MCF 10A (cell line): ENCODE measurements at regions of chr18 and their contacts with region 1.

Region 1: GRCh38 chr18:63410792-63411191 is 11.5 kb downstream of the VPS4B start:
- DNase-seq: peak; percentile 74
- H3K4me3 Mint-ChIP-seq: no peak overlapping the region
- H3K27ac Mint-ChIP-seq: peak overlapping the region; percentile 57
- H3K4me1 Mint-ChIP-seq: peaks cover 25% of the 10 kb centered on the region
- H3K27me3 Mint-ChIP-seq: no peaks in the 10 kb centered on the region
- CTCF ChIP-seq: no peak

Region 2: DNA sequence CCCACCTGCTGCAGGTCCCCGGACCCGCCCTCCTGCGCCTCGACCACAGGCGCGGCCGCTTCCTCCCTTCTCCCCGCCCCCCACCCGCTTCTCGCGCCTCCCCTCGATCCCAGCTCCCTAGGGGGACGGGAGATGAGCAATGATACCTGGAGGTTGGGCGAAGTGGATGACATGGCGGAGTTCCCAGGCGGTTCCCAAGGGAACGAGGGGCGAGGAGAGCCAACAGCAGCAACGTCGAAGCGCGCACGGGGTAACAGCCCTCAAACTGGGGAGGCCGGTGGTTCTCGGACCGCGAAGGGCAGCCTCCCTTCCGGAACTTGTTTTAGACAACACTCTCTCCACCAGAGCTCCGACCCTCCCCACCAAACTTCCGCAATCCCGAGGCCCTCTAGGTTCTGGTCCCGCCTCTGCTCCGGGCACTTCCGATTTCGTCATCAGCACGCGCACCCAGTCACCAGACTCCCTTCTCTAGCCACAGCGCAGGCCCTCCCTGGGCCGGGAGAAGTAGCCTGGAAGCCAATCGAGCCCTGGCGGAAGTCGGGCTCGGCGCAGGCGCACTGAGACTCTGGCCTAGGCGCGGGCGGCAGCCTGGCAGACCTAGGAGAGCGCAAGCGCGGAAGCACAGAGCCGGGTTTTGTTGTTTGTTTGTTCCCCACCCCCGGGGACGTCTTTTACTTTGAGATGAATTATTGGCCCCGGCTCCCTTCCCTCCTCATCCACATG is 11.5 kb after region 1 on chr18 and contains the start of gene VPS4B:
- CTCF ChIA-PET with region 1: interaction called, 5 read pairs
- POLR2A ChIA-PET with region 1: interaction called, 85 read pairs
- intact Hi-C with region 1: no loop called
- DNase-seq: peak; percentile 99
- H3K4me3 Mint-ChIP-seq: peak within 1 kb of the TSS; percentile 91
- H3K27ac Mint-ChIP-seq: peak within 1 kb of the TSS; percentile 100
- H3K4me1 Mint-ChIP-seq: peaks cover 12% of the 10 kb centered on the region
- H3K27me3 Mint-ChIP-seq: no peaks in the 10 kb centered on the region
- CTCF ChIP-seq: no peak
- total RNA-seq, gene VPS4B: 67.8 and 89.8 TPM in 2 replicates

Region 3: DNA sequence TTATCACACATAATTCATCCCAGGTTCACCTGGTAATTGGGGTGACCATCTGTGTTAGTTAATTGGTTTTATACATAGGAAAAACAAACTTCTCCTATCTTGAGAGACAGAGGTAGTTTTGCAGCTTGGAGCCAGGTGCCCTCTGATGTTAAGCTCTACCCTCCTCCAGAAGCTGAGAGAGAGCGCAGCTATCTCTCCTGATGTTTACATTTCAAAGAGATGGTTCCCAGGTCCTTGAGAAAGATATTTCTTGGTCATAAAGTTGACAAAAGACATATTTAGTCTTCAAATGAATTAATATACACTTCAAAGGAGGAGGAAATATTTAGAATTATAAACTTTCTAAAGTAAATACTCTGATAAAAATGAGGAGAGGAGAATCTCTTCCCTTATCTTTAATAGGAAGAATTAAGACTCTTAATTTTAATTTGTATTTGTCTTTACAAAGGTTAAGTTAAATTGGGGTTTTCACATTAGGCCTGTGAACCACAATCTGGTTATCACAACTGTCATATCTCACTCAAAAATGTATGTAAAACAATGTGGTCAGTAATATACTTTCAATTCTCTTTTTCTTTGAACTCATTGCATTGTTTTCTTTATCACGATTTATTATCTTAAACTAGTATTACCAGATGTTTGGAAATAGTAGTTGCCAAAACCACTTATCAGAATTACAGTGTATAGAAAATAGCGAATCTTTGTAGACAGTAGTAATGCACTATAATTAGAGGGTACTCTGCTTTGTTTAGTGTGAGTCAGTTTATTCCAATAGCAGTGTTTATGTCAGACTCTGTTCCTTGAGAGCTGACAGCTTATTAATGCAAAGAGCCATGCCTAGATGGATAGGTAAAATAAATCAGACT is 206.5 kb after region 1 on chr18:
- CTCF ChIA-PET with region 1: no interaction called
- POLR2A ChIA-PET with region 1: no interaction called
- intact Hi-C with region 1: no loop called
- DNase-seq: no peak
- H3K4me3 Mint-ChIP-seq: no peak overlapping the region
- H3K27ac Mint-ChIP-seq: no peak overlapping the region
- H3K4me1 Mint-ChIP-seq: no peaks in the 10 kb centered on the region
- H3K27me3 Mint-ChIP-seq: no peaks in the 10 kb centered on the region
- CTCF ChIP-seq: no peak

Region 4: GRCh38 chr18:63648241-63648640 is 237.4 kb after region 1 on chr18:
- CTCF ChIA-PET with region 1: no interaction called
- POLR2A ChIA-PET with region 1: no interaction called
- intact Hi-C with region 1: no loop called
- DNase-seq: peak; percentile 62
- H3K4me3 Mint-ChIP-seq: no peak overlapping the region
- H3K27ac Mint-ChIP-seq: no peak overlapping the region
- H3K4me1 Mint-ChIP-seq: peaks cover 11% of the 10 kb centered on the region
- H3K27me3 Mint-ChIP-seq: no peaks in the 10 kb centered on the region
- CTCF ChIP-seq: no peak